Activated CD4-positive, alpha-beta T cell treated with anti-CD3 and anti-CD28 coated beads, Interleukin-2, amount 10 ng/mL, durations not matched to agents 24 days and 14 days (primary cell): ENCODE measurements at regions of chr10 and their contacts with region 1.

Region 1: GRCh38 chr10:102776779-102777456 is 33.2 kb downstream of the WBP1L start:
- DNase-seq: no peak
- H3K4me3 Mint-ChIP-seq: no peak overlapping the region
- H3K27ac Mint-ChIP-seq: peak overlapping the region; percentile 9
- H3K4me1 Mint-ChIP-seq: peaks cover 41% of the 10 kb centered on the region
- H3K27me3 Mint-ChIP-seq: no peaks in the 10 kb centered on the region

Region 2: DNA sequence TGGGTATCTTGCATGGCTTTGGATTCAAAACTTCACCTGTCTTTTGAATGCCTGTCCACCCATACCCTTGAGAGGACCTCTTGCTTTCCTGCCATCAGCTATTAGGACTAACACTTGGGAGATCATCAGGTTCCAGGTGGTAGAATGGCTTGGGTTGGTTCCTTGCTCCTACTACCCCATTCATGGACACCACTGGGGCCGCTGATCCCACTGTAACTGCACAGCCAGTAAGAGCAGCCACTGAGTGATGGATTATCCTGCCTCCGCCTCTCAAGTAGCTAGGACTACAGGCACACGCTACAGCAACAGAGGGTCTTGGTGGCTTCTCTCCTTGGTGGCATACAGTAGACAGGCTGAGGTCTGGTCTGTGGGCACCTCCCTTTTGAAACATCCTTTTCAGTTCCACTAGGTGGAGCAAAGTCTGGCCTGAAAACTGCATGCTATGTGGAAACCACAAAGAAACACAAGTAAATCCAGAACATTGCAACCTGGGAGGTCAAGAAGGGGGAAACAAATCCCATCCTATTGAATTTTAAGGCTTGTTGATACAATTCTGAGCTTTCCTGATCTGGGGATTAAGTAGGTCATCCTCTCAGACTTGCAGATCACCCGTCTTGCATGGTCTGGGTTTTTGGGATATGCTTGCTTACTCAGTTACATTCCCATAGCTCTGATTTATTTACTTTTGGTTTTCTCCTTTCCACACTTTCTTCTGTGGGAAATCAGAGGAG is 23.8 kb before region 1 on chr10:
- intact Hi-C with region 1: loop called (anchors 2 kb)
- DNase-seq: peak; percentile 75
- H3K4me3 Mint-ChIP-seq: no peak overlapping the region
- H3K27ac Mint-ChIP-seq: peak overlapping the region; percentile 14
- H3K4me1 Mint-ChIP-seq: peaks cover 36% of the 10 kb centered on the region
- H3K27me3 Mint-ChIP-seq: no peaks in the 10 kb centered on the region

Region 3: GRCh38 chr10:102763037-102763631 is 13.8 kb before region 1 on chr10:
- intact Hi-C with region 1: loop called (anchors 2 kb)
- DNase-seq: no peak
- H3K4me3 Mint-ChIP-seq: no peak overlapping the region
- H3K27ac Mint-ChIP-seq: no peak overlapping the region
- H3K4me1 Mint-ChIP-seq: peaks cover 22% of the 10 kb centered on the region
- H3K27me3 Mint-ChIP-seq: no peaks in the 10 kb centered on the region

Region 4: DNA sequence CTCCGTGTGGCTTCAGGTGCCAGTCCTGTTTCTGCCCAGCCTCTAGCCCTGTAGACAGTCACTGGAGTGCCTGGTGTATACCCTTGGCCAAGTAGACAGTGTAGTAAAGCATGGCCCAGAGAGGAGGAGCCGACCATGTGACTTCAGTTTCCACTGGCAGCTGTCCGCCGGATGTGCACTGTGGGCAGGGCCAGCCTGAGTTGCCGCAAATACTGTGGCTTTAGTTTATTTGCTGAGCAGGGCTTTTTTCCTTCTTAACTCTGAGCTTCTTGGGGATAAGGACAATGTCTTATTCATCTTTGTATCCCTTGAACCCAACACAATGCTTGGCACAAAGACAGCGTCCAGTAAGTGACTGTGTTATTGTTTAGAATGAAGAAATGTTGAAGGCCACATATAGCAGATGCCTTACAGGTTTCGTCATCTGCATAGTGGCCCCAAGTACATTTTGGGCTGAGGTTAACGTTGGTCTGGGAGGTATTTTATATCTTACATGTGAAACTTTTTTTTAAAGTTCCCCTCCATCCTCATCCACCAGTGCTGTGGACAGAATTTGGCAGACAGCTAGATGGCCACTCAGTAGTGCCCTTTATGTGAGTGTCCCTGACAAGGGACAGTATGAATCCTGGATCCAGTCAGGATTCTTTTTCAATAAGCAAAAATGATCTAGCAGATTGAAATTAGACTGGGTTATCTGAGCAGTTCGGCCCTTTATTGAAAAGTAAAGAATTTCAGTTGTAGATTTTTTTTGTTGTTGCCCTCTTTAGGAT is 19.7 kb after region 1 on chr10:
- intact Hi-C with region 1: no loop called
- DNase-seq: peak; percentile 88
- H3K4me3 Mint-ChIP-seq: peak overlapping the region; percentile 22
- H3K27ac Mint-ChIP-seq: peak overlapping the region; percentile 85
- H3K4me1 Mint-ChIP-seq: peaks cover 18% of the 10 kb centered on the region
- H3K27me3 Mint-ChIP-seq: no peaks in the 10 kb centered on the region

Region 5: DNA sequence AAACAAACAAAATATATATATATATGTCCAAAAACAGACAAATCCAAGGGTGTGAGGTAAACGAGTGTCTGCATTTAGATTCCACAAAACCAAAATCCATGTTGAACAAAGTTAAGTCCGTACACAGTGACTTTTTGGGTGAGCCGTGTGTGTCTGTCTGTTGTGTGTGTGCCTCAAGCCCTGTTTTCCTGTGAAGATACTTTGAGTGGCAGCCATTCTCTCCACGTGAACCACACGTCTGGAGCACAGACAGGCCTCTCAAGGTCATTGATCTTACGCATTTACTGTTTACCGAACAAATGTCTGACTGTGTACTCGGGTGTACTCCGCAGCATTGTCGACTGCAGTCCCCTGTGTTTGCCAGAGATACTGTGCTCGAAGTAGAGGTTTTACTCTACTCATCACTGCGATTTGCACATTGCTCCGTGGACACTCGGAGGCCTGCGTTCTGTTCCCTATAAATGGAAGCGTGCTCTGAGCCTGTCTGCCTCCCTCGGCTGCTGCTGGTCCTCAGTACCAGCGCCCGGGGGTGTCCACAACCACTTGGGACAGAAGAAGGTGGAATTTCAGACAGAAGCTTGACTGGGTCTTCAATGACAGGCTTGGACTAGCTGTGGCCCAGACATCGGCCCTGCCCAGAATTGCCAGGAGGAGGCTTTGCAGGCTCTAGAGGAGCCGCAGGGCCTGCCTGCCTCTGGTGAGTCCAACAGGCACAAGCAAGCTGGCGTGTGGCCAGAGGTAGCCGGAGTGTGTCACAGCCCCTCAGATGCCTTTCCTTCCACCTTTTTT is 38.1 kb after region 1 on chr10:
- intact Hi-C with region 1: loop called (anchors 5 kb)
- DNase-seq: no peak
- H3K4me3 Mint-ChIP-seq: no peak overlapping the region
- H3K27ac Mint-ChIP-seq: no peak overlapping the region
- H3K4me1 Mint-ChIP-seq: peaks cover 16% of the 10 kb centered on the region
- H3K27me3 Mint-ChIP-seq: no peaks in the 10 kb centered on the region